CD8-positive, alpha-beta T cell (primary cell): ENCODE measurements at regions of chr1 and their contacts with region 1.

Region 1: GRCh38 chr1:26602378-26602959 is 72.9 kb downstream of the RPS6KA1 start:
- DNase-seq: peak in 5 of 9 experiments; percentile 16 to 81 (median 49)
- ATAC-seq: peak; percentile 67
- H3K4me3 ChIP-seq: no peak overlapping the region
- H3K4me3 Mint-ChIP-seq: no peak overlapping the region
- H3K27ac ChIP-seq: no peak overlapping the region
- H3K27ac Mint-ChIP-seq: no peak overlapping the region
- H3K4me1 ChIP-seq: peaks cover 5% of the 10 kb centered on the region
- H3K4me1 Mint-ChIP-seq: peaks cover 8% of the 10 kb centered on the region
- H3K27me3 ChIP-seq: no peaks in the 10 kb centered on the region
- H3K27me3 Mint-ChIP-seq: no peaks in the 10 kb centered on the region
- CTCF ChIP-seq: peak; percentile 98

Region 2: GRCh38 chr1:26500488-26501175 is 101.8 kb before region 1 on chr1:
- CTCF ChIA-PET with region 1: interaction called, 14 read pairs
- POLR2A ChIA-PET with region 1: interaction called, 3 read pairs
- intact Hi-C with region 1: loop called in 1 of 2 experiments (anchors 1 kb)
- DNase-seq: peak; percentile 74 to 95 (median 89)
- ATAC-seq: peak; percentile 75
- H3K4me3 ChIP-seq: peak overlapping the region; percentile 67 to 96
- H3K4me3 Mint-ChIP-seq: peak overlapping the region; percentile 84
- H3K27ac ChIP-seq: peak overlapping the region; percentile 84 to 89
- H3K27ac Mint-ChIP-seq: peak overlapping the region; percentile 89
- H3K4me1 ChIP-seq: peaks cover 13% of the 10 kb centered on the region
- H3K4me1 Mint-ChIP-seq: peaks cover 15% of the 10 kb centered on the region
- H3K27me3 ChIP-seq: no peaks in the 10 kb centered on the region
- H3K27me3 Mint-ChIP-seq: no peaks in the 10 kb centered on the region
- CTCF ChIP-seq: peak; percentile 15

Region 3: GRCh38 chr1:26645734-26646133 is 43.3 kb after region 1 on chr1:
- CTCF ChIA-PET with region 1: no interaction called
- POLR2A ChIA-PET with region 1: no interaction called
- intact Hi-C with region 1: no loop called
- DNase-seq: no peak
- ATAC-seq: no peak
- H3K4me3 ChIP-seq: no peak overlapping the region
- H3K4me3 Mint-ChIP-seq: no peak overlapping the region
- H3K27ac ChIP-seq: no peak overlapping the region
- H3K27ac Mint-ChIP-seq: no peak overlapping the region
- H3K4me1 ChIP-seq: no peaks in the 10 kb centered on the region
- H3K4me1 Mint-ChIP-seq: no peaks in the 10 kb centered on the region
- H3K27me3 ChIP-seq: no peaks in the 10 kb centered on the region
- H3K27me3 Mint-ChIP-seq: no peaks in the 10 kb centered on the region
- CTCF ChIP-seq: no peak

Region 4: DNA sequence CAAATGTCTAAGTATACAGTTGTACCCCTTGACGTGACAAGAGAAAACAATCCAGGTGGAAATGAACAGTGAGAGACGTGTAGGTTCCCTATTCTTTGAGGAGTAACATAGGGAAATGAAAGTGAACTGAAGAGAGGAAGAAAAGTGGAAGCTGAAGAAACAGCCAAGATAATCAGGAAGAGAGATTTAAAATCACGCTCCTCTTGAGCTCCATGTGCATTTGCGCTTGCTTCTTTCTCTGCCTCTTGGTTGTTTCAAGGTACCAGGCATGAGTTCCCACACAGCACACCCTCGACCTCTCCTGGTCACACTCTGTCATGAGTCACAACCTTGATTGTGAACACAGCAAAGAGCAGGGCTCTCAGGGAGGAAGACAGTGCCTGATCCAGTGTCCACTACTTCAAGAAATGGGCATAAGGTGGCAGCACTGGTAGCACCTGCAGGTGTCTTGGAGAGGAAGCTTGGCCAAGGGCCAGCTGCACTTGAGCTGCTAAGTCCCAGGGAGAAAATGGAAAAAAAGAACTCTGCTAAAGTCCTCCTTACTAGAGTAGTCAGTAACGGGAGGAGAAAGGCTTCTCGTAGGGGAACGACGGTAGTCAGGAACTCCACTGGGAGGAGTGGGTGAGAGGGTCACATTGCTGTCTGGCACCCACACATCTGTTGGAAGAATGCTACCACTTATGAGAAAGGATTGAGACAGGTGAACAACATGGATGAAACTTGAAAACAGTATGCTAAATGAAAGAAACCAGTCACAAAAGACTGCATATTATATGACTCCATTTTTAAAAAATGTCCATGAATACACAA is 75.0 kb after region 1 on chr1:
- CTCF ChIA-PET with region 1: interaction called, 32 read pairs
- POLR2A ChIA-PET with region 1: no interaction called
- intact Hi-C with region 1: loop called (anchors 1 kb)
- DNase-seq: peak; percentile 16 to 82 (median 55)
- ATAC-seq: peak; percentile 94
- H3K4me3 ChIP-seq: no peak overlapping the region
- H3K4me3 Mint-ChIP-seq: peak overlapping the region; percentile 29
- H3K27ac ChIP-seq: no peak overlapping the region
- H3K27ac Mint-ChIP-seq: peak overlapping the region; percentile 23
- H3K4me1 ChIP-seq: peaks cover 11% of the 10 kb centered on the region
- H3K4me1 Mint-ChIP-seq: peaks cover 18% of the 10 kb centered on the region
- H3K27me3 ChIP-seq: no peaks in the 10 kb centered on the region
- H3K27me3 Mint-ChIP-seq: no peaks in the 10 kb centered on the region
- CTCF ChIP-seq: peak; percentile 48

Region 5: GRCh38 chr1:26811057-26811456 is 208.6 kb after region 1 on chr1:
- CTCF ChIA-PET with region 1: interaction called, 33 read pairs
- POLR2A ChIA-PET with region 1: no interaction called
- intact Hi-C with region 1: no loop called
- DNase-seq: peak in 2 of 9 experiments; percentile 63 to 78
- ATAC-seq: peak; percentile 27
- H3K4me3 ChIP-seq: no peak overlapping the region
- H3K4me3 Mint-ChIP-seq: no peak overlapping the region
- H3K27ac ChIP-seq: peak overlapping the region in 1 of 2 experiments; percentile 64
- H3K27ac Mint-ChIP-seq: peak overlapping the region; percentile 58
- H3K4me1 ChIP-seq: peaks cover 8% of the 10 kb centered on the region
- H3K4me1 Mint-ChIP-seq: peaks cover 14% of the 10 kb centered on the region
- H3K27me3 ChIP-seq: no peaks in the 10 kb centered on the region
- H3K27me3 Mint-ChIP-seq: no peaks in the 10 kb centered on the region
- CTCF ChIP-seq: no peak

Region 6: DNA sequence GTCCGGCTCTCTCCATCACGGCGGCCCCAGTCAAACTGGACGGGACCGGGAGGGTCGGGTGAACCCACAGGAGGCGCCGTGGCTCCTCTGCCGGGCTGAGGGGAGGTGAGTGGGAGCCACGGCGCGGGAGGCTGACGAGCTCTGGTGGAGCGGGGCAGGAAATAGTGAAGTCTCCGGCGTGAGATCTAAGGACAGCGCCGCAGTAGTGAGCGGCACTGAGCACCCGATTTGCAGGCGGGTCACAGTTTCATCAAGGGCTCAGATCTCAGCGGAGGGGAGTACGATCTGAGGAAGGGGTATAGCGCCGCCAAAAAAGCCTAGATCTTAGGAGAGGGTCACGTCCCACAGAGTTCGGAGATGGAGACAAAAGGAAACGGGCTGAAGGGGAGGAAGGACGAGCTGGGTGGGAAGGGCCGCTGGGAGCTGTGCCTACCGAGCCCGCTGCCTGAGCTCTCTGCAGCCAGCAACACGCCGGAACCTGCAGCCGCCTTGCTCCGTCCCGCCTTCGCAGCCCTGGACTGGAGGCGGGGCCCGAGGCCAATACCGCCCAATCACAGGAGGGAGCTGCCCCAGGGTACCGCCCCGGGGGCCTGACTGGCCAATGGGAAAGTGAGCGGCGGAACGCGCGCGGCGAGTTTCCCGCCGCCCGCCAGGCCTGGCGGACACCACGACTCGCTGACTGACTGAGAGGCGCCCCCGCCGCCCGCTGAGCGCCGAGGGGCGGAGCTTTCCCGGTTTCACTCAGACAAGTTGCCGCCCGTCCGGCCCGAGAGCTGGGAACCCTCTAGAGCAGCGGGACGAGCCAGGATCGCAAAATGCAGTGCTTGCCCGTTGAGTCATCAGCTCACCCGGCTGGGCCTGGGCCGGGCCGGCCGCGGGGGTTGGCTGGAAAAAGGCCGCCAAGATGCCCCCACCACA is 262.4 kb after region 1 on chr1:
- CTCF ChIA-PET with region 1: interaction called, 14 read pairs
- POLR2A ChIA-PET with region 1: interaction called, 3 read pairs
- intact Hi-C with region 1: no loop called
- DNase-seq: peak; percentile 89 to 97 (median 93)
- ATAC-seq: peak; percentile 96
- H3K4me3 ChIP-seq: peak overlapping the region; percentile 60 to 88
- H3K4me3 Mint-ChIP-seq: peak overlapping the region; percentile 97
- H3K27ac ChIP-seq: peak overlapping the region; percentile 52 to 80
- H3K27ac Mint-ChIP-seq: peak overlapping the region; percentile 91
- H3K4me1 ChIP-seq: peaks cover 4% of the 10 kb centered on the region
- H3K4me1 Mint-ChIP-seq: peaks cover 15% of the 10 kb centered on the region
- H3K27me3 ChIP-seq: no peaks in the 10 kb centered on the region
- H3K27me3 Mint-ChIP-seq: no peaks in the 10 kb centered on the region
- CTCF ChIP-seq: no peak

Region 7: GRCh38 chr1:26889551-26890466 is 287.3 kb after region 1 on chr1 and contains the start of gene GPN2:
- CTCF ChIA-PET with region 1: interaction called, 17 read pairs
- POLR2A ChIA-PET with region 1: no interaction called
- intact Hi-C with region 1: no loop called
- DNase-seq: peak; percentile 44 to 90 (median 74)
- ATAC-seq: peak; percentile 92
- H3K4me3 ChIP-seq: peak within 1 kb of the TSS; percentile 57 to 94
- H3K4me3 Mint-ChIP-seq: peak within 1 kb of the TSS; percentile 94
- H3K27ac ChIP-seq: peak within 1 kb of the TSS; percentile 80 to 86
- H3K27ac Mint-ChIP-seq: peak within 1 kb of the TSS; percentile 96
- H3K4me1 ChIP-seq: peaks cover 18% of the 10 kb centered on the region
- H3K4me1 Mint-ChIP-seq: peaks cover 42% of the 10 kb centered on the region
- H3K27me3 ChIP-seq: no peaks in the 10 kb centered on the region
- H3K27me3 Mint-ChIP-seq: no peaks in the 10 kb centered on the region
- CTCF ChIP-seq: no peak
- total RNA-seq, gene GPN2: 35.1 to 37.4 TPM